Activated T-helper 2 cell treated with anti-CD3 and anti-CD28 coated beads, Interferon-gamma antibody, Interleukin-2, Interleukin-4, amounts not matched to agents 10 μg/mL and 5 μg/mL and 100 μg/mL, durations not matched to agents 14 hours and 24 hours and 36 hours (primary cell): ENCODE measurements at regions of chr11 and their contacts with region 1.

Region 1: GRCh38 chr11:8688414-8689362 is 6.1 kb downstream of the RPL27A start:
- DNase-seq: peak; percentile 80
- H3K4me3 Mint-ChIP-seq: peak overlapping the region; percentile 94
- H3K27ac Mint-ChIP-seq: peak overlapping the region; percentile 96
- H3K4me1 Mint-ChIP-seq: peaks cover 48% of the 10 kb centered on the region
- H3K27me3 Mint-ChIP-seq: no peaks in the 10 kb centered on the region

Region 2: DNA sequence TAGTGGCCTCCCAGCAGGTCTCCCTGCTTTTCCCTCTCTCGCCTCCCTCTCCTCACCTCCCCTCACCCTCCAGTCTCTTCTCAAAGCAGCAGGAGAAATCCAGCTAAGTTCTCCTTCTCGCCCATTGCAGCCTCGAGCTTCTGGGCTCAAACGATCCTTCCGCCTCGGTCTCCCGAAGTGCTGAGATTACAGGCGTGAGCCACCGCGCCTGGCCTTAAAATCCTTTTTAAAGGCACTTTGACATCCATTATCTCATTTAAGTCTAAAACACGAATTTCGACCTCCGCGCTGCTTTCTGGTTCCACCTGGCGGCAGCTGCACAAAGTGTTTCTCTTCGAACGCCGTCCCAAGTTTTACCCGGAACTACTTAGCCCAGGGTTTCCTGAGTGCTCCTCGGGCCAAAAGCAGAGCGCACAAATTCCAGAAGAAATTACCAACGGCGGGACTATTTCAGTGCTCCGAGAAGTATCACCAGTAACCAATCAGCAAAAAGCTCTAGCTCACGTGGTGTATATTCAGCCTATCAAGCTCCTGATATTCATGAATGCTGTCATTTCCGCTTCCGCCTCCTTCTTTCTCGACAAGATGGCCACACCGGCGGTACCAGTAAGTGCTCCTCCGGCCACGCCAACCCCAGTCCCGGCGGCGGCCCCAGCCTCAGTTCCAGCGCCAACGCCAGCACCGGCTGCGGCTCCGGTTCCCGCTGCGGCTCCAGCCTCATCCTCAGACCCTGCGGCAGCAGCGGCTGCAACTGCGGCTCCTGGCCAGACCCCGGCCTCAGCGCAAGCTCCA is 701.7 kb before region 1 on chr11 and contains the start of gene EIF3F:
- intact Hi-C with region 1: loop called (anchors 10 kb)
- DNase-seq: peak; percentile 91
- H3K4me3 Mint-ChIP-seq: peak within 1 kb of the TSS; percentile 98
- H3K27ac Mint-ChIP-seq: peak within 1 kb of the TSS; percentile 91
- H3K4me1 Mint-ChIP-seq: peaks cover 32% of the 10 kb centered on the region
- H3K27me3 Mint-ChIP-seq: no peaks in the 10 kb centered on the region
- total RNA-seq, gene EIF3F: 237 and 239 TPM in 2 replicates

Region 3: DNA sequence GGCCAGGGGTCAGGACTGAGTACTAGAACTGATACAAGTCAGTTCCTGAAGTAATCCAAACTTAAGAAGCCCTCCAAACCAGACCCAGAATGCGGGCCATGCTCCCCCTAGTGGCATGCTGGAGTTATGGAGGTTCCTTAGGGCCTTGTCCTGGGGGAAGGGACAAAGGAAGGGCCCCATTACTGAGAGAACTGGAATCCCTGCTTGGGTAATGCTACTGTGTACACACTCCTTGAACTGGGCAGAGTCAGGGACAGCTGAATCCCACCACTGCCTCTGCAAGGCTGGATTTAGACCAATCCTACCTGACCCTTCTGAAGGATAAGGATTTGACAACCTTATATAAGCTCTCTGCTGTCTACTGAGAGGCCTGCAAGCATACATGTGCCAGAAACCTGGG is 125.0 kb after region 1 on chr11:
- intact Hi-C with region 1: loop called (anchors 5 kb)
- DNase-seq: peak; percentile 24
- H3K4me3 Mint-ChIP-seq: no peak overlapping the region
- H3K27ac Mint-ChIP-seq: no peak overlapping the region
- H3K4me1 Mint-ChIP-seq: peaks cover 5% of the 10 kb centered on the region
- H3K27me3 Mint-ChIP-seq: peaks cover 22% of the 10 kb centered on the region

Region 4: DNA sequence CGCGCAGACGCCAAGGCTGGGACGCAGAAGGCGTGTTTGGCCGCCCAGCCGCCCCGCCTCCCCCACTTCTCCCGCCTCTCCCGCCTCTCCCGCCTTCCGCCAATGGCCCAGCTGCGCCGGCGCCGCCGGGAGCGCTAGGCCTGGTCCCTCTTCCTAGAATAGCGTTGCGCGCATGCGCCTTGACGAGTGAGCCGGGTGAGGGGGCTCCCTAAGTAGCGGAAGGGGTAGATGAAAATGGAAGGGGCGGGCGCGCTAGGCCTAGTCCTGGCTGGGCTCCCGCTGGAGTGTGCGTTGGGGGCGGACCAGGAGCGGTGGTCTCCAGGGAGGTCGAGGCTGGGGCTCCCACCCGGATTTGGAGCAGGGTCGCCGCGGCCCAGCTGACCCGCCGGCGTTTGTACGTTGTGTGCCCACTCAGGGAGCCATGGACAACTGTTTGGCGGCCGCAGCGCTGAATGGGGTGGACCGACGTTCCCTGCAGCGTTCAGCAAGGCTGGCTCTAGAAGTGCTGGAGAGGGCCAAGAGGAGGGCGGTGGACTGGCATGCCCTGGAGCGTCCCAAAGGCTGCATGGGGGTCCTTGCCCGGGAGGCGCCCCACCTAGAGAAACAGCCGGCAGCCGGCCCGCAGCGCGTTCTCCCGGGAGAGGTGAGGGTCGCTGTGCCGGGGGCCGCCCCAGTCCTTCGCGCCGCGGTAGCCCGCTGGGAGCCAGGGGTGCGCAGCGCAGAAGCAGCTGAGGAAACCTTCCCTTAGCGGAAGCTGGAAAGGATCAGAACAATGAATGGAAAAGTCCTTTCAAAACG is 222.5 kb after region 1 on chr11 and contains the start of gene AKIP1:
- intact Hi-C with region 1: loop called (anchors 1 kb)
- DNase-seq: peak; percentile 73
- H3K4me3 Mint-ChIP-seq: peak within 1 kb of the TSS; percentile 94
- H3K27ac Mint-ChIP-seq: peak within 1 kb of the TSS; percentile 82
- H3K4me1 Mint-ChIP-seq: peaks cover 36% of the 10 kb centered on the region
- H3K27me3 Mint-ChIP-seq: peaks cover 30% of the 10 kb centered on the region
- total RNA-seq, gene AKIP1: 22.2 and 23.4 TPM in 2 replicates

Region 5: GRCh38 chr11:9280655-9281301 is 592.1 kb after region 1 on chr11:
- intact Hi-C with region 1: no loop called
- DNase-seq: peak; percentile 71
- H3K4me3 Mint-ChIP-seq: peak overlapping the region; percentile 56
- H3K27ac Mint-ChIP-seq: peak overlapping the region; percentile 40
- H3K4me1 Mint-ChIP-seq: peaks cover 17% of the 10 kb centered on the region
- H3K27me3 Mint-ChIP-seq: no peaks in the 10 kb centered on the region

Region 6: DNA sequence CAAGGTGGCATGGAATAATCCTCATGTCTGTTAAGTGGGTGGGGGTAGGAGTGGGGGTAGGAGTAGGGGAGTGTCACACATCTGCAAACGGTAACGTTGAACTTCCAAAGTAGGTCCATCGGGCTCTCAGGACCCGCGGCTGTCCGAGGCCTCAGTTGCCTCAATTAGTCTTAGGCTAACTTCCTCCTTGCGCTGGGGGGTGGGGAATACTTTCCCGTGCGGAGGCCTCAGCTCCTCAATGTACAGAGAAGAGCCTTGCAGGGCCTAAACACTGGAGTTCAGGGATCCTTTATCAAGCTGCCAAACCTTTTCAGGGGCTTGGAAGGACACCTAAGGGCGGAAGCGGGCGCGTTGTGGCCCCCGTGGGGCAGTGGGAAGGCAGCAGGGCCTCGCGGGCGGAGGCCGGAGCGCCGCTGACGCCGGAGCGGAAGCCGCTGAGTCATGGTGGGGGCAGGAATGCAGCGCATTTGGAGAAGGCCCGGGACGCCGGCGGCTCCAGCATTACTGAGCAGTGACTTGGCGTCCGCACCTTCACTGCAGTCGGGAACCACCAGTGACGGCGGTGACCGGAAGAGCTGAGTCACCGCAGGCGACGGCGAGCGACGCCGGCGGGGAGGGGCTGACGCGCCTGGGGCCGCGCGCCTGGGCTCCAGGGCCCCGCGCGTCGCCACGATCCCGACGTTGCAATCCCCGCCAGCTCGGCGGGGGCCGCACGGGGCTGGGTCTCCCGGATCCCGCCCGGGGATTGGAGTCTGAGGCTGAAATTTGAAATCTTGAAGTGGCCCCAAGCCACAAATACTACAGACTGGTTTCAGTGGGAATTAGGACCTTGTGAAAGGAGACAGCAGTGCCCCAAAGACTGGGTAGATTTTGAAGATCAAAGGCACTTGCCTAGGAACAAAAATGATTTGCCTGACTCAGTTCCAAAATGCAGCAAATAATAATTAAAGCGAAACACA is 675.5 kb after region 1 on chr11:
- intact Hi-C with region 1: loop called (anchors 10 kb)
- DNase-seq: peak; percentile 72
- H3K4me3 Mint-ChIP-seq: peak overlapping the region; percentile 73
- H3K27ac Mint-ChIP-seq: peak overlapping the region; percentile 84
- H3K4me1 Mint-ChIP-seq: peaks cover 27% of the 10 kb centered on the region
- H3K27me3 Mint-ChIP-seq: no peaks in the 10 kb centered on the region

Region 7: DNA sequence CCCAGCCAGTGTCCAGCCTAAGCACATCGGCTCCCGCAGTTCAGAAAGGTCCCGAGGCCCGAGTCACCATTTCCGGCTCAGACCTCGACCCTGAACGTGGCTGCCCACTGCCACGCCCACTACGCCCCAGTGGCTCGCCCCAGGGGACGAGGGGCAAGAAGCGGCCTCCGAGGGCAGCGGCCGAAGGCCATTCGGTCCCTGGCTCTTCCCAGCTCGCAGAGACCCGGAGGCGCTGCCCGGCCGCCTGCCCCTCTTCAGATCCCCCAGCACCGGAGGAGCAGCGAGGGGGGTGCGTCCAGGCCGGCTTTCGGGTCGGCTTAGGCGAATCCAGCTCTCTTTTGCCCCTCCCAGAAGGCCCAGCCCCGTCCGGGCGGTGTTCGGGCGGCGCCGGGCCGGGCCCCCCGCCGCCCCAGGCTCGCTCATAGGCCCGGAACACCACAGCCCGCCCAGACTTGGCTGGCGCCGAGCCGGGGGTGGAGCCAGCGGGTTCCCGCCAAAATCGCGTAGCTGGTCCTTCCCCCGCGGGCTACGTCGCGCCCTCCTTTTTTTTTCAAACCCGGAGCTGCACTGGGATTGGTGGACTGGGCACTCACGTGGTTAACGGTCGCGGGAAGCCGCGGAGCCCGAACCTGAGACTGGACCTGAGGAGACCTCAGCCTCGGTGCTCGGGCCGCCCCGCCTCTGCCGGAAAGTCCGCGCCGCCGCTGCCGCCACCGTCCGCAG is 884.5 kb after region 1 on chr11 and contains the start of gene WEE1:
- intact Hi-C with region 1: loop called (anchors 10 kb)
- DNase-seq: peak; percentile 98
- H3K4me3 Mint-ChIP-seq: peak within 1 kb of the TSS; percentile 91
- H3K27ac Mint-ChIP-seq: peak within 1 kb of the TSS; percentile 89
- H3K4me1 Mint-ChIP-seq: peaks cover 36% of the 10 kb centered on the region
- H3K27me3 Mint-ChIP-seq: peaks cover 2% of the 10 kb centered on the region
- total RNA-seq, gene WEE1: 48.6 and 49.6 TPM in 2 replicates